ENCODE measurements at regions of chr11 and their contacts with region 1.

Region 1: DNA sequence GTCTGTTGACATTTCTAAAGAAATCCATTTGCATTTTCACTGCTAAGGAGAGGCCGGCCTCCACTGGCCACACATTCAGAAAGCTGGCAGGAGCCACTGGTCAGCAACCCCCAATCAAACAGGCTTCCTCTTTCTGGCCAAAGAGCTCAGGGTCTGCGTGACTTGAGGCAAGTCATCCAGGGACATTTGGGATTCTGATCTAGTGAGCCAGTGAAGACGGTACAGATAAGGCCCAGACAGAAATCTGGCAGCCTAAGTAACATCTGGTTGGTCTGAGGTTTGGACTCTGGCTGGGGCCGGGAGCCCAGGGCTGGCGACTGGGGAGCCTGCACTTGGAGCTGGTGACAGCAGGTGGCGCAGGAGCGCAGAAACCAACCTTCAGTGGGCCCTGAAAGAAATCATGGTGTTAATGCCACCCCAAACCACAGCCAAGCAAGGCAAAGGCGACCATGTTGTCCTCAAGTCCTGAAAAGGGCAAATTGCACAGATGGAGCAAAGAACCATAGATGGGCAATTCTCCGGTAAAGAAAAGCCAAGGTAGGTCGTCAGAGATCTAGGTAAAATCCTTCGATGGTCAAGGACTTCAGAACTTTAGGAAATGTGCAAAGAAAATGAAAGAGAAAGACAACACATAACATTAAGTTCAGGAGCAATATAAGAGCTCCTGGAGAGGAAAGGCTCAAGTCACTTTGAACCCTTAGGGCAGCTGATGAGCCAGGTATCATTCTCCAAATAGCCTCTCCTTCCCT is 99.4 kb upstream of the BLID start:
- DNase-seq: peak; percentile 57 to 76
- ATAC-seq: peak; percentile 88 to 94
- H3K4me3 ChIP-seq: no peak overlapping the region
- H3K27ac ChIP-seq: peak overlapping the region; percentile 48 to 65 (median 60)
- H3K4me1 ChIP-seq: peaks cover 8 to 25% of the 10 kb centered on the region in 2 donors
- H3K27me3 ChIP-seq: no peaks in the 10 kb centered on the region
- CTCF ChIP-seq: peak; percentile 91 to 97 (median 93)
- POLR2A ChIP-seq: no peak

Region 2: GRCh38 chr11:122020902-122021301 is 194.5 kb before region 1 on chr11:
- in situ Hi-C with region 1: loop called in 1 of 4 experiments (anchors 10 kb)
- intact Hi-C with region 1: no loop called
- DNase-seq: no peak
- ATAC-seq: no peak
- H3K4me3 ChIP-seq: no peak overlapping the region
- H3K27ac ChIP-seq: no peak overlapping the region
- H3K4me1 ChIP-seq: no peaks in the 10 kb centered on the region
- H3K27me3 ChIP-seq: no peaks in the 10 kb centered on the region
- CTCF ChIP-seq: peak in 3 of 5 experiments; percentile 10 to 46 (median 26)
- POLR2A ChIP-seq: no peak

Region 3: GRCh38 chr11:122095681-122096262 is 119.6 kb before region 1 on chr11:
- in situ Hi-C with region 1: no loop called
- intact Hi-C with region 1: no loop called
- DNase-seq: no peak
- ATAC-seq: no peak
- H3K4me3 ChIP-seq: peak overlapping the region; percentile 59 to 65 (median 60)
- H3K27ac ChIP-seq: peak overlapping the region; percentile 86 to 92 (median 88)
- H3K4me1 ChIP-seq: peaks cover 13 to 20% of the 10 kb centered on the region in 2 donors
- H3K27me3 ChIP-seq: no peaks in the 10 kb centered on the region
- CTCF ChIP-seq: no peak
- POLR2A ChIP-seq: no peak

Region 4: GRCh38 chr11:122235615-122236014 is 20.2 kb after region 1 on chr11:
- in situ Hi-C with region 1: no loop called
- intact Hi-C with region 1: loop called (anchors 2 kb)
- DNase-seq: peak; percentile 87 to 90
- ATAC-seq: peak; percentile 98 to 100
- H3K4me3 ChIP-seq: no peak overlapping the region
- H3K27ac ChIP-seq: peak overlapping the region; percentile 70 to 86 (median 78)
- H3K4me1 ChIP-seq: peaks cover 22 to 28% of the 10 kb centered on the region in 2 donors
- H3K27me3 ChIP-seq: no peaks in the 10 kb centered on the region
- CTCF ChIP-seq: no peak
- POLR2A ChIP-seq: no peak

Region 5: GRCh38 chr11:122309262-122309925 is 94.0 kb after region 1 on chr11:
- in situ Hi-C with region 1: no loop called
- intact Hi-C with region 1: loop called (anchors 1 kb)
- DNase-seq: peak; percentile 20 to 28
- ATAC-seq: peak; percentile 93 to 95
- H3K4me3 ChIP-seq: peak overlapping the region; percentile 40 to 56 (median 46)
- H3K27ac ChIP-seq: peak overlapping the region; percentile 62 to 78 (median 74)
- H3K4me1 ChIP-seq: peaks cover 18 to 21% of the 10 kb centered on the region in 2 donors
- H3K27me3 ChIP-seq: no peaks in the 10 kb centered on the region
- CTCF ChIP-seq: no peak
- POLR2A ChIP-seq: no peak

Region 6: DNA sequence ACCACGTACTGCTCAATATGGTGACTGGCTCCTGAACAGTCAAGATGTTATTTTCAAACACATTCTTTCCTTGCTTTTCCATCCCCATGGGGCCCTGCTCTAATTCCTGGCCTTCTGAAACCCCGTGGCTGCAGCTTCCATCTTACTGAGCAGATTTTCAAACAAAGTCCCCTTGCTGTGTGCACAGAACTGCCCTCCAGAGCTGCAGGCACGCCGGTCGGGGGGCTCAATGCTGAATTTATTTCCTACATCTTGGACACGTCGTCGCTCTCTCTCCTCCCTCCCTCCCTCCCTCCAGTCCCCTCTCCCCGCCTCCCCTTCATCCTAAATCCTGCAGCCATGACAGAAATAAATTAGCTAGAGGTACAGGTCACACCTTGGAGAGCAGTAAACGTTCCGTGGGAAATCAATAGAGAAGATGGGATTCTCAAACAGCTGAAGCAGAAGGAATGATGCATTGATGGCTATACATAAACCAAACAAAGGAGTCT is 143.7 kb after region 1 on chr11:
- in situ Hi-C with region 1: loop called in 1 of 4 experiments (anchors 10 kb)
- intact Hi-C with region 1: loop called (anchors 5 kb)
- DNase-seq: no peak
- ATAC-seq: no peak
- H3K4me3 ChIP-seq: no peak overlapping the region
- H3K27ac ChIP-seq: no peak overlapping the region
- H3K4me1 ChIP-seq: peaks cover 0 to 6% of the 10 kb centered on the region in 2 donors
- H3K27me3 ChIP-seq: no peaks in the 10 kb centered on the region
- CTCF ChIP-seq: no peak
- POLR2A ChIP-seq: no peak

Region 7: GRCh38 chr11:122367809-122368231 is 152.4 kb after region 1 on chr11:
- in situ Hi-C with region 1: loop called in 1 of 4 experiments (anchors 10 kb)
- intact Hi-C with region 1: no loop called
- DNase-seq: no peak
- ATAC-seq: peak in 1 of 2 donors; percentile 44
- H3K4me3 ChIP-seq: no peak overlapping the region
- H3K27ac ChIP-seq: no peak overlapping the region
- H3K4me1 ChIP-seq: peaks cover 0 to 11% of the 10 kb centered on the region in 2 donors
- H3K27me3 ChIP-seq: no peaks in the 10 kb centered on the region
- CTCF ChIP-seq: no peak
- POLR2A ChIP-seq: no peak

Region 8: GRCh38 chr11:122422707-122423106 is 207.3 kb after region 1 on chr11:
- in situ Hi-C with region 1: no loop called
- intact Hi-C with region 1: no loop called
- DNase-seq: no peak
- ATAC-seq: no peak
- H3K4me3 ChIP-seq: no peak overlapping the region
- H3K27ac ChIP-seq: no peak overlapping the region
- H3K4me1 ChIP-seq: no peaks in the 10 kb centered on the region
- H3K27me3 ChIP-seq: no peaks in the 10 kb centered on the region
- CTCF ChIP-seq: no peak
- POLR2A ChIP-seq: no peak

Measured in gastrocnemius medialis (tissue), 4 donors.